H1 (cell line): ENCODE measurements at regions of chr12 and their contacts with region 1.

Region 1: GRCh38 chr12:153080-153746 is 60.7 kb downstream of the SLC6A12 start:
- DNase-seq: peak; percentile 70 to 89
- H3K4me3 ChIP-seq: peak overlapping the region in 1 of 4 experiments; percentile 29; a peak in 1 of 8 replicates
- H3K27ac ChIP-seq: no peak overlapping the region
- H3K4me1 ChIP-seq: peaks cover 0 to 11% (median 2%) of the 10 kb centered on the region in 4 experiments; a peak in 5 of 7 replicates
- H3K27me3 ChIP-seq: no peaks in the 10 kb centered on the region
- CTCF ChIP-seq: peak; percentile 99
- EP300 ChIP-seq: no peak
- POLR2A ChIP-seq: no peak
- RAD21 ChIP-seq: peak; percentile 82 to 88

Region 2: GRCh38 chr12:106118-106591 is 47.1 kb before region 1 on chr12:
- CTCF ChIA-PET with region 1: interaction called, 50 read pairs
- POLR2A ChIA-PET with region 1: no interaction called
- DNase-seq: no peak
- H3K4me3 ChIP-seq: no peak overlapping the region
- H3K27ac ChIP-seq: no peak overlapping the region
- H3K4me1 ChIP-seq: peaks cover 0 to 17% (median 9%) of the 10 kb centered on the region in 4 experiments; a peak in 6 of 7 replicates
- H3K27me3 ChIP-seq: no peaks in the 10 kb centered on the region; a peak in 1 of 7 replicates
- CTCF ChIP-seq: peak; percentile 44 to 79 (median 58)
- EP300 ChIP-seq: no peak
- POLR2A ChIP-seq: no peak
- RAD21 ChIP-seq: peak; percentile 54 to 56

Region 3: GRCh38 chr12:117816-118345 is 35.3 kb before region 1 on chr12:
- CTCF ChIA-PET with region 1: interaction called, 31 read pairs
- POLR2A ChIA-PET with region 1: interaction called, 4 read pairs
- DNase-seq: no peak
- H3K4me3 ChIP-seq: no peak overlapping the region
- H3K27ac ChIP-seq: no peak overlapping the region
- H3K4me1 ChIP-seq: no peaks in the 10 kb centered on the region; a peak in 1 of 7 replicates
- H3K27me3 ChIP-seq: no peaks in the 10 kb centered on the region
- CTCF ChIP-seq: no peak
- EP300 ChIP-seq: no peak
- POLR2A ChIP-seq: no peak
- RAD21 ChIP-seq: no peak

Region 4: DNA sequence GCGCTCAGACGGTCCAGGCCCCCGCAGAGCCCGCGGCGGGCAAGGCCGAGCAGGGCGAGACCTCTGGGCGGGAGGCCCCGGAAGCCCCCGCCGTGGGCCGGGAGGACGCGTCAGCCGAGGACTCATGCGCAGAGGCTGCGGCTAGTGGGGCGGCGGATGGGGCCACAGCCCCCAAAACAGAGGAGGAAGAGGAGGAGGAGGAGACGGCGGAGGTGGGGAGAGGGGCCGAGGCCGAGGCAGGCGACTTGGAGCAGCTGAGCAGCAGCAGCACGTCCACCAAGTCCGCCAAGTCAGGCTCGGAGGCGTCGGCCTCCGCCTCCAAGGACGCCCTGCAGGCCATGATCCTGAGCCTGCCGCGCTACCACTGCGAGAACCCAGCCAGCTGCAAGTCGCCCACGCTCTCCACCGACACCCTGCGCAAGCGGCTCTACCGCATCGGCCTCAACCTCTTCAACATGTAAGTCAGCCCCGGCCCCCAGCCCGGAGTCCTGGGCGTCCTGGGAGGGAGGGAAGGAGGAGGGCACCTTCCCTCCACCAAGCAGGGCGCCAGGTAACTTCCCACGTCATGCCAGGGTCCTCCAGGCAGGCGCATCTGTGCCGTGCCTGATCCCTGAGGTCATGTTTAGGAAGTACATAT is 14.2 kb before region 1 on chr12:
- CTCF ChIA-PET with region 1: interaction called, 26 read pairs
- POLR2A ChIA-PET with region 1: interaction called, 19 read pairs
- DNase-seq: peak in 1 of 2 experiments; percentile 70
- H3K4me3 ChIP-seq: peak overlapping the region; percentile 18 to 53 (median 26); a peak in 6 of 8 replicates
- H3K27ac ChIP-seq: no peak overlapping the region
- H3K4me1 ChIP-seq: peaks cover 4 to 41% (median 26%) of the 10 kb centered on the region in 4 experiments
- H3K27me3 ChIP-seq: peaks cover 6 to 41% (median 27%) of the 10 kb centered on the region in 4 experiments
- CTCF ChIP-seq: no peak
- EP300 ChIP-seq: no peak
- POLR2A ChIP-seq: no peak
- RAD21 ChIP-seq: no peak

Region 5: DNA sequence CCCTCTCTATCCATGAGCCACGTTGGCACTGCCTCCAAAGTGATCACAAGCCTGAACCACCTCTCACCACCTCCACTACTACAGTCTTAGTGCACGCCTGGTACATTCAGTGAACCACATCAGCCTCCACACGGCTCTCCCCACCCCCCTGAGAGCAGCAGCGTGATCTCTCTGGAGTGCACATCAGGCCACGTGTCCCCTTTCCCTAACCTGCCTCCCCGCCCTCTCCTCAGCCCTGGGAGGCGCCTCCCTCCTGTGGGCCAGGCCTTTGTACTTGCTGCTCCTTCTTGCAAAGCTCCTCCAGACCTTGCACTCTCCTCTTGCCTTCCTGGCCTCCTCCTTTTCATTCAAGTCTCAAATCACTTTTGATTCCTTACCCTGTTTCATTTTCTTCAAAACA is 11.0 kb after region 1 on chr12:
- CTCF ChIA-PET with region 1: interaction called, 51 read pairs
- POLR2A ChIA-PET with region 1: interaction called, 6 read pairs
- DNase-seq: no peak
- H3K4me3 ChIP-seq: no peak overlapping the region
- H3K27ac ChIP-seq: no peak overlapping the region
- H3K4me1 ChIP-seq: peaks cover 3 to 11% (median 7%) of the 10 kb centered on the region in 4 experiments
- H3K27me3 ChIP-seq: peaks cover 0 to 3% (median 1%) of the 10 kb centered on the region in 4 experiments; a peak in 1 of 7 replicates
- CTCF ChIP-seq: no peak
- EP300 ChIP-seq: no peak
- POLR2A ChIP-seq: no peak
- RAD21 ChIP-seq: no peak

Region 6: DNA sequence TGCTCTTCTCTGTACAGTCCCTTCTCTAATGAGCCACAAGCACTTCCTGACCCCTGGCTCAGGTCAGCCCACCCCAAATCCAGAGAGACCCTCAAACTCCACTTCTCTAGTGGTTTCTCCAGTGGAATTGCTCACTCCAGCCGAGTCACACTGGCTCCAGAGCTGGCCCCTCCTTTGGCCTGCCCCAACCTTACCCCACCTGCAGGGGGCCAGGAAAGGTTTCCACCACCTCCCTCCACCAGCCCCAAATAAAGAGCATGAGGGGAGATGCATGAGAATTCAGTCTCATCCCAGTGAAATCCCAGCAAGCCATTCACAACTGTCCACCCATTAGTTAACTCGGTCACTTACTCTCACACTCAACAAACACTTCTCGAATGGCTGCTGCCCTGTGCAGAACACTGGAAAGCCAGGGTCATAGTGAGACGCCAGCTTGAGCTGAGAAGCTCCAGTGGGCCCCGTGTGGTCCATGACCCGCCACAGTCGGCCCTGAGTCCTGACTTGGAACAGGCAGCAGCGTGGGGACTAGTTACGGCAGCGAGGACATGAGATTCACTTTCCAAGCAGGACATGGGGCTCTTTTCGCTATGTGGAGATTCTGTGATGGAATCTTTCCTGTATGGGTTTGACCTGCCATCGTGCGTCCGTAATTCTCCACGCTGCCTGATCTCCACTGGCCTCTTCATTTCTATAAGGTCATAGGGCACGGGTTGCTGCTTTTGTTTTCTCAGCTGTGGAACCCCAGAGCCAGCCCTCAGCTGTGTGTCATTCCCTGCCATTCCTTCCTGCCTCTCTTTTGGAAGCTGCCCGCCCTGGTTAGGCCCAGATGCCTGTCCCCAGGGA is 16.5 kb after region 1 on chr12:
- CTCF ChIA-PET with region 1: interaction called, 51 read pairs
- POLR2A ChIA-PET with region 1: interaction called, 6 read pairs
- DNase-seq: no peak
- H3K4me3 ChIP-seq: no peak overlapping the region
- H3K27ac ChIP-seq: no peak overlapping the region
- H3K4me1 ChIP-seq: peaks cover 3 to 28% (median 20%) of the 10 kb centered on the region in 4 experiments
- H3K27me3 ChIP-seq: peaks cover 0 to 3% (median 2%) of the 10 kb centered on the region in 4 experiments; a peak in 2 of 7 replicates
- CTCF ChIP-seq: no peak
- EP300 ChIP-seq: no peak
- POLR2A ChIP-seq: no peak
- RAD21 ChIP-seq: peak in 1 of 2 experiments; percentile 20; a peak in 1 of 4 replicates

Region 7: DNA sequence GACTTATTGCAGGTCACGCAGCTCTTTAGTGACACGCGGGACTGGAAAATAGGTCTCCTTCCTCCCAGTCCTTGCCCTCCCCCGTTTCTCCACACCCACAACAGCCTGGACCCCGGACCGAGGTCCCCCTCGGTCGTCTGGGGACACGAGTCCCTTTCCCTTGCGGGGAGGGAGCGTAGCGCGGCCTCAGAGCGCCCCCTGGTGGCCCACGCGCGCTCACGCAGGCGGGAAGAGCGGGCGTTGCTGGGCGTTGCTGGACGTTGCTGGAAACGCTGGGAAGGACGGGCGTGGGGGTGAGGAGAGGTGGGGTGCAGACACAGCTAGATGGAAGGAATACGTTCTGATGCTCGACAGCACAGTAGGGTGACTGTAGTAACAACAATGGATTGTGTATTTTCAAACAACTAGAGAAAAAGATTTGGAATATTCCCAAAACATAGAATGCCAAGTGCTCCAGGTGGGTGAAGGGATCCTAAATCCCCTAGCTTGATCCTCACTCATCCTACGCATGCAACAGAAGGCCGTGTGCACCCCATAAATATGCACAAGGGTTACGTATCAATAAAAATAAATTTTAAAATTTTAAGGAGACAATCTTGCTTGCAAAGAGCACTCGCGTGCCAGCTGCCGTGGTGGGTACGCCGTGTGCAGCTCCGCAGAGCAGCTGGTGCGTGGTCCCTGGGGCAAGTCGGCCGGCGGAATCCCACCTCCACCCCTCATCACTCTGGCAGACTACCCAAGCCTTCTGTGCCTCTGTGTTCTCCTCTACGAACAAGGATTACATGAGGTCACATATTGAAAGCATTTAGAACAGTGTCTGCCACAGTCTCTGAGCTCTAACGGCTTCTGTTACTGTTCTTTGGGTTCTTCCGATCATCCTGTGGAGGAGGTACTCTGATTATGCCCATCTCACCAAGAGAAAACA is 394.0 kb after region 1 on chr12:
- CTCF ChIA-PET with region 1: no interaction called
- POLR2A ChIA-PET with region 1: no interaction called
- DNase-seq: peak in 1 of 2 experiments; percentile 89
- H3K4me3 ChIP-seq: no peak overlapping the region
- H3K27ac ChIP-seq: no peak overlapping the region
- H3K4me1 ChIP-seq: peaks cover 0 to 8% (median 4%) of the 10 kb centered on the region in 4 experiments; a peak in 3 of 7 replicates
- H3K27me3 ChIP-seq: no peaks in the 10 kb centered on the region
- CTCF ChIP-seq: peak; percentile 92 to 99 (median 94)
- EP300 ChIP-seq: no peak
- POLR2A ChIP-seq: no peak
- RAD21 ChIP-seq: peak; percentile 99

Region 8: GRCh38 chr12:1130164-1130563 is 977.0 kb after region 1 on chr12:
- CTCF ChIA-PET with region 1: no interaction called
- POLR2A ChIA-PET with region 1: no interaction called
- DNase-seq: no peak
- H3K4me3 ChIP-seq: no peak overlapping the region
- H3K27ac ChIP-seq: no peak overlapping the region
- H3K4me1 ChIP-seq: no peaks in the 10 kb centered on the region
- H3K27me3 ChIP-seq: no peaks in the 10 kb centered on the region; a peak in 1 of 7 replicates
- CTCF ChIP-seq: no peak
- EP300 ChIP-seq: no peak
- POLR2A ChIP-seq: no peak
- RAD21 ChIP-seq: no peak